ENCODE measurements at regions of chr4 and their contacts with region 1.

Region 1: GRCh38 chr4:70993181-70994068 is at the start of gene DCK:
- DNase-seq: peak; percentile 91
- H3K4me3 Mint-ChIP-seq: peak within 1 kb of the TSS; percentile 91
- H3K27ac Mint-ChIP-seq: peak within 1 kb of the TSS; percentile 83
- H3K4me1 Mint-ChIP-seq: peaks cover 35% of the 10 kb centered on the region
- H3K27me3 Mint-ChIP-seq: no peaks in the 10 kb centered on the region
- total RNA-seq, gene DCK: 37.0 to 37.2 TPM

Region 2: GRCh38 chr4:70704331-70705145 is 288.9 kb before region 1 on chr4:
- CTCF ChIA-PET with region 1: no interaction called
- POLR2A ChIA-PET with region 1: interaction called, 7 read pairs
- intact Hi-C with region 1: loop called (anchors 1 kb)
- DNase-seq: peak; percentile 75
- H3K4me3 Mint-ChIP-seq: peak overlapping the region; percentile 85
- H3K27ac Mint-ChIP-seq: peak overlapping the region; percentile 80
- H3K4me1 Mint-ChIP-seq: peaks cover 25% of the 10 kb centered on the region
- H3K27me3 Mint-ChIP-seq: no peaks in the 10 kb centered on the region

Region 3: GRCh38 chr4:71004281-71004851 is 10.9 kb after region 1 on chr4:
- CTCF ChIA-PET with region 1: interaction called, 69 read pairs
- POLR2A ChIA-PET with region 1: interaction called, 7 read pairs
- intact Hi-C with region 1: loop called (anchors 1 kb)
- DNase-seq: peak; percentile 72
- H3K4me3 Mint-ChIP-seq: peak overlapping the region; percentile 4
- H3K27ac Mint-ChIP-seq: peak overlapping the region; percentile 64
- H3K4me1 Mint-ChIP-seq: peaks cover 79% of the 10 kb centered on the region
- H3K27me3 Mint-ChIP-seq: no peaks in the 10 kb centered on the region

Region 4: DNA sequence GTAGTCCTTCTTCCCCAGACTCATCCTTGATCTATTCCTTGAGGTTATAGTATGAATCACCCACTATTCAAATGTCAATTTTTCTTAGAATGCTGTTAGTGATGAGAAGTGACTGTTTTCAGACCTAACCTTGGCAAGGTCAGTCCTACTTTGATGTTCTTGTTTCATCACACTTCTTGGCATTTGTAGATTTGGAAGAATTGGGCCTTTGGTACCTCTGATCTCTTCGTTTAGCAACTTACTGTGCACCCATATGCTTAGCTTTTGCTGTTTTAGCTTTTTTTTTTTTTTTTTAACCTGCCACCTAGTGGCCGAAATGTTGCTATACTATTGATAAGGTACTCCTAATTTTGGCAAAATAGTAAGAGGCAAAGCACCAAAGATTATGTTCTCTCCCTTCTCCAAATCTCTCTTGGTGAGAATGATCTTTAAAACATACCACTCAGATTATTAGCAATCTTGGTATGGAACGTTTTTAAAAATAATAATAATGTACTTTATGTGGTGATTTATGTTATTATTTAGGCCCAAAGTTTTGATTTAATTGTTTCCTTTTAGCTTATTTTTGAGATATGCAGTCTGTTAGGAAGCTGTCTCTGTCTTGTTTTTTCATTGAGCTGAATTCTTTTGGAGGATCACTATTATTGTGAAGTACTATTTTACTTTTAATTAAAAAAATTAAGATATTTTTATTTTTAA is 16.6 kb after region 1 on chr4:
- CTCF ChIA-PET with region 1: interaction called, 69 read pairs
- POLR2A ChIA-PET with region 1: interaction called, 5 read pairs
- intact Hi-C with region 1: loop called (anchors 1 kb)
- DNase-seq: no peak
- H3K4me3 Mint-ChIP-seq: no peak overlapping the region
- H3K27ac Mint-ChIP-seq: peak overlapping the region; percentile 82
- H3K4me1 Mint-ChIP-seq: peaks cover 31% of the 10 kb centered on the region
- H3K27me3 Mint-ChIP-seq: no peaks in the 10 kb centered on the region

Region 5: GRCh38 chr4:71184195-71184781 is 190.9 kb after region 1 on chr4:
- CTCF ChIA-PET with region 1: interaction called, 4 read pairs
- POLR2A ChIA-PET with region 1: interaction called, 3 read pairs
- intact Hi-C with region 1: loop called (anchors 5 kb)
- DNase-seq: peak; percentile 44
- H3K4me3 Mint-ChIP-seq: no peak overlapping the region
- H3K27ac Mint-ChIP-seq: no peak overlapping the region
- H3K4me1 Mint-ChIP-seq: peaks cover 27% of the 10 kb centered on the region
- H3K27me3 Mint-ChIP-seq: peaks cover 27% of the 10 kb centered on the region